ENCODE measurements at regions of chr4 and their contacts with region 1.

Region 1: DNA sequence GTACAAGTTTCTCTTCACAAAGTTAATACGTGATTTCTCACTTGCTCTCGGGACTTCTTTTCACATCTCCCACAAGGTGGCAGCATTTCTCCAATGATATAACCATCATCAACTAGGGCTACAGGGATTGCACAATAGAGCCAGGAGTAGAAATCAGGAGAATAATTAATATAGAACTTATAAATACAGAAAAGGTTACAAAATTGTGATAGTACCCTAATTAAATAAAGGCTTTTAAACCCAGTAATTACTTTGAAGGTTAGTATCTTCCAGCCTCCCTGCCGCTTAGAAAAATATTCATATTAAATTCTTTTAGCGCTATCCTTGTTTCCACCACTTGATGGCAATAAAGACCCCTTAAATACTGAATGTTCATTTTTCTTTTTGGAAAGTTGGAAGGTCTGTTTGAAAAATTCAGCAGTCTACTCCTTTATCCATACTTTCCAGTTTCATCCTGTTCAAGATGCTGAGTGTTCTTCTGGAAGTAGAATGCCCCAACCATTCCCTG is 65.8 kb downstream of the RASGEF1B start:
- DNase-seq: peak in 31 of 42 donors; percentile 10 to 87 (median 64)

Region 2: DNA sequence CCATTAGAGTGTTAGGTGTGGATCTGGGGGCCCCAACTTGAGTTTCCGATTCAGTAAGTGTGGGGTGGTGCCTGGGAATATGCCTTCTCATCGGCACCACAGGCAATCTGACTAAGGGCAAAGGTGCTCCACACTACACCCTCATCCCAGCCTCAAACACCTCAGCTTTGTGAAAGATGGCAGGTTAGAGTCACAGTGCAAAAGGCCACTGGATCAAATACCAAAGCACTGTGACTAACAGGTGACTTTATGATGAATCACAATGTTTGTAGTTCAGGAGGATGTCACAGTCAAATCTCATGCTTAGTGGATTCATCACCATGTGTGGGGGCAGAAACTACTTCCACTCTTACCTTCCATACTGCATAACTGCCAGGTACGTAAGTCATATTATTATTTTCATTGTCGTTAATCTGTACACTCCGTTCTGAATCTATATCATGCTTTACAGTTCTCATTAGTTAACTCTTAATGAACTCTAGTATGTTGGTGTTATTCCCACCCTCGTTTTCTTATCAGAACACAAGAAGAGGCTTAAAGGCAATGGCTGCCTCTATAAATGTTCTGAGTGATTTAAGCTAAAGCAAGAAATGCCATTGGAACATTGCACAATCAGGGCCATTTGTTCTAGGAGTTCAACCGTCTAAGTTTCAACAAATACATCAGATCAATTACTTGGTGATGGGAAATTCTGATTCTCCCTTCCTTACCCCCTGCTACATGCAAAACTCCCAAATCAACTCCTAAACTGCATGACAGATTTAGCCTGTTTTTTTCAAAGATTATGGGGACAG is 241.1 kb before region 1 on chr4:
- intact Hi-C with region 1: no loop called
- DNase-seq: peak in 6 of 42 donors; percentile 2 to 43 (median 8)

Region 3: DNA sequence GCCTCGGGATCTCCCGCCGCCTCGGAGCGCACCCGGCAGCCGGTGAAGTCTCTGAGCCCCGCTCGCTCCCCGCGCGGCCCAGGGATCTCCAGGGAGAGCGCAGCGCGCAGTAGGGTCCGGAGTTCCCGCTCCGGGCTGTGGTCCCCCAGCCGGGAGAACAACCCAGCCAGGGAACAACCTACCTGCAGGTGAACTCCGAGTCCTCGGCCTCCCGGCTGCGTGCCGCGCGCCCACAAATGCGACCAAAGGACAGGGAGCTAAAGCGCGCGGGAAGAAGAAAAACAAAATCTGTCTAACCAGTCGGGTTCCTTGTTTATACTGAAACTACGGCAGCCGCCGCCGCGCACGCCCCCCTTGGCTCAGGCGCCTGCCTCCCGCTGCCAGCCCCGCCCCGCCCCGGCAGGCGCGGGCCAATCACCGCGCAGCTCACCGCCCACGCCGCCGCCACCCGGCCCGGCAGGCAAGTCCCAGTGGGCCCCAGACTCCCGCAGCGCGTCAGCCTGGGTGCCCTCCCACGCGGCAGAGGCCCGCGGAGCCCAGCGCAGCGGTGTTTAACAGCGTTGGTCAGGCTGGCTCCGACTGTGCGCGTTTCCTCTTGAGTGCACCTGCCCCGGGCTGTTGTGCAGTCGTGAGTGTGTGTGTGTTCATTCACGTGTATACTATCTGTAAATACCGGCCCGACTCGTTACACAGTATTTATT is 65.8 kb after region 1 on chr4 and contains the start of gene RASGEF1B:
- intact Hi-C with region 1: loop called (anchors 10 kb)
- DNase-seq: peak; percentile 82 to 98 (median 95)

Region 4: DNA sequence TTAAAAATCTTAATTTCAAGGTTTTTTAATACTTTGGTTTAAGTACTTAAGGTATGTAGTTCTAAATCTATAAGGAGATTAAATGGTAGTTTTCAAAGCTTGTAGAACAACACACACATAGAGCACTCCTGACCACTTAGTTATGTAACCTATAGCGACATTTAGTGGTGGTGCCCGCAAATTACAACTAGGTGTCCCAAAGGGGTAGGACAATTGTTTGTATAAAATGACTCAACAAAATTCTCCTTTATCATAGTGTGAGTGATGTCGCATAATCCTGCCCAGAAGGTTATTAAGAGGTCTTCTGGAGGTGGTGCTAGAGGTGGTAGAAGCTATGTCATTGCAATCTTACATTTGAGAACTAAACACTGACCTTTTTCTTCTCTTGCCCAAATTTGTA is 438.8 kb after region 1 on chr4:
- intact Hi-C with region 1: loop called (anchors 5 kb)
- DNase-seq: peak; percentile 8 to 93 (median 72)

Region 5: DNA sequence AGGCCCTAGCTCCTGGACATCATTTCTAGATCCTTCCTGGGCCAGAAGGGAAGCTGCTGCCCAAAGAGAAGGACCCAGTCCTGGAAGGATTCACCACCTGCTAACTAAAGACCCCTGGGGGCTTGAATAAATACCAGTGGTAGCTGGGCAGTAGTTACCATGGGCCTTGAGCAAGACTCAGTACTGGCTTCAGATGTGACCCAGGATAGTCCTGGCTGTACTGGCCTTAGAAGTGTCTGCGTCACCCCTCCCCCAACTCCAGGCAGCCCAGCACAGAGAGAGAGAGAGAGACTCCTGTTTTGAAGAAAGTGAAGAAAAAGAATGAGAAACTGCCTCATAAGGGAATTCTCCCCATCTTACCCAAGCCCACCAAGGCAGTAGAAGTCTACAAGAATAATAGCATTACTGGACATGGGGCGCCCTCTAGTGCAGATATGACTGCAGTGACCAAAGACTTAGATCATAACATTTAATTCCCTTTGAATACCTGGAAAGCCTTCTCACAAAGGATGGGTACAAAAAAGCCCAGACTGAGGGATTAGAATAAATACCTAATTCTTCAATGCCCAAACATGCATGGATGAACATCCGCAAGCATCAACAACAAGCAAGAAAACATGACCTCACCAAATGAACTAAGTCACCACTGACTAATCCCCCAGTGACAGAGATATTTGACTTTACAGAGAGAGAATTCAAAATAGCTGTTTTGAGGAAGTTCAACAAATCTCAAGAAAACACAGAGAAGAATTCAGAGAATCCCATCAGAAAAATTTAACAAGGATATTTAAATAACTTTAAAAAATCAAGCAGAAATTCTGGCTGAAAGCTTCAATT is 796.1 kb after region 1 on chr4:
- intact Hi-C with region 1: loop called (anchors 5 kb)
- DNase-seq: peak in 31 of 42 donors; percentile 11 to 76 (median 42)

Region 6: GRCh38 chr4:82268050-82268825 is 862.3 kb after region 1 on chr4:
- intact Hi-C with region 1: loop called (anchors 5 kb)
- DNase-seq: peak; percentile 14 to 86 (median 66)